ENCODE measurements at regions of chr13 and their contacts with region 1.

Region 1: GRCh38 chr13:54433493-54434206 is 1405.0 kb downstream of the OLFM4 start:
- DNase-seq: no peak

Region 2: GRCh38 chr13:53092931-53093330 is 1340.7 kb before region 1 on chr13:
- CTCF ChIA-PET with region 1: no interaction called
- POLR2A ChIA-PET with region 1: no interaction called
- DNase-seq: no peak

Region 3: GRCh38 chr13:54210397-54211035 is 223.1 kb before region 1 on chr13:
- CTCF ChIA-PET with region 1: no interaction called
- POLR2A ChIA-PET with region 1: no interaction called
- DNase-seq: no peak

Region 4: GRCh38 chr13:54356209-54356608 is 77.4 kb before region 1 on chr13:
- CTCF ChIA-PET with region 1: interaction called, 11 read pairs
- POLR2A ChIA-PET with region 1: no interaction called
- DNase-seq: no peak

Region 5: DNA sequence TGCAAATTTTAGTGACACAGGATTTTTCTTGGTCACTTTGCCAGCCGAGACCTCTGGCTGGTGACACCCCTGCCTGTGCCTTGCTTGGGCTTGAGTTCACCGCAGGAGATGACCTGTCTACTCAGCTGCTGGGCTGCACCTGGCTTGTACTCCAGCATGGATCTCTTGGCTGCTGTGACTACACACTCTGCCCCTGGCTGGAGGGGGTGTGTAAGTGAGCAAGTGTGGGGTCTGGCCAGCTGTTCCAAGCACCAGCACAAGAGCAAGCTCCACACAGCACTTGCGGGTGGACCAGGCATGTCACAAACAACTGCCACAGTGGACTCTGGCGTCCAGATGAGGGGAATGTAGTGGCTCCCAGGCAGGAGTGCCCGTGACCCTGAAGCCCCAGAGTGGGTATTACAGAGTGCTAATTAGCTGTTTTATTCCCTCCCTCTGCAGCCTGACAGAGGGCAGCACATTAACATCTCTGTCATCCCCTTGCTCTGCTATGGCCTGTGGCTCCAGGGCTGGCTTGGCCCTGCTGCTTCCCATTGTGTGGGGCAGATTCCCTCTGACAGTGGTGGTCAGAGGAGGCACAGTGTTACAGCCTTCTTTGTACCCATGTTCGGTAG is 17.8 kb before region 1 on chr13:
- CTCF ChIA-PET with region 1: no interaction called
- POLR2A ChIA-PET with region 1: no interaction called
- DNase-seq: no peak

Measured in HEK293T (cell line).